Activated B cell treated with CpG ODN at 0.5 μM for 24 hours (primary cell): ENCODE measurements at regions of chr19 and their contacts with region 1.

Region 1: GRCh38 chr19:42132851-42133528 is 744 bp upstream of the POU2F2 start:
- DNase-seq: peak; percentile 97
- ATAC-seq: peak; percentile 27
- H3K4me3 Mint-ChIP-seq: peak overlapping the region; percentile 95
- H3K27ac Mint-ChIP-seq: peak overlapping the region; percentile 90
- H3K4me1 Mint-ChIP-seq: peaks cover 60% of the 10 kb centered on the region
- H3K27me3 Mint-ChIP-seq: no peaks in the 10 kb centered on the region
- CTCF ChIP-seq: no peak

Region 2: GRCh38 chr19:42108527-42109389 is 24.2 kb before region 1 on chr19:
- CTCF ChIA-PET with region 1: interaction called, 426 read pairs
- POLR2A ChIA-PET with region 1: interaction called, 1,230 read pairs
- intact Hi-C with region 1: loop called (anchors 1 kb)
- DNase-seq: peak; percentile 76
- ATAC-seq: peak; percentile 92
- H3K4me3 Mint-ChIP-seq: peak overlapping the region; percentile 47
- H3K27ac Mint-ChIP-seq: peak overlapping the region; percentile 81
- H3K4me1 Mint-ChIP-seq: peaks cover 69% of the 10 kb centered on the region
- H3K27me3 Mint-ChIP-seq: no peaks in the 10 kb centered on the region
- CTCF ChIP-seq: peak; percentile 99

Region 3: GRCh38 chr19:42176990-42177685 is 44.1 kb after region 1 on chr19:
- CTCF ChIA-PET with region 1: interaction called, 28 read pairs
- POLR2A ChIA-PET with region 1: interaction called, 18 read pairs
- intact Hi-C with region 1: loop called (anchors 1 kb)
- DNase-seq: peak; percentile 71
- ATAC-seq: peak; percentile 91
- H3K4me3 Mint-ChIP-seq: no peak overlapping the region
- H3K27ac Mint-ChIP-seq: no peak overlapping the region
- H3K4me1 Mint-ChIP-seq: peaks cover 15% of the 10 kb centered on the region
- H3K27me3 Mint-ChIP-seq: peaks cover 20% of the 10 kb centered on the region
- CTCF ChIP-seq: no peak

Region 4: DNA sequence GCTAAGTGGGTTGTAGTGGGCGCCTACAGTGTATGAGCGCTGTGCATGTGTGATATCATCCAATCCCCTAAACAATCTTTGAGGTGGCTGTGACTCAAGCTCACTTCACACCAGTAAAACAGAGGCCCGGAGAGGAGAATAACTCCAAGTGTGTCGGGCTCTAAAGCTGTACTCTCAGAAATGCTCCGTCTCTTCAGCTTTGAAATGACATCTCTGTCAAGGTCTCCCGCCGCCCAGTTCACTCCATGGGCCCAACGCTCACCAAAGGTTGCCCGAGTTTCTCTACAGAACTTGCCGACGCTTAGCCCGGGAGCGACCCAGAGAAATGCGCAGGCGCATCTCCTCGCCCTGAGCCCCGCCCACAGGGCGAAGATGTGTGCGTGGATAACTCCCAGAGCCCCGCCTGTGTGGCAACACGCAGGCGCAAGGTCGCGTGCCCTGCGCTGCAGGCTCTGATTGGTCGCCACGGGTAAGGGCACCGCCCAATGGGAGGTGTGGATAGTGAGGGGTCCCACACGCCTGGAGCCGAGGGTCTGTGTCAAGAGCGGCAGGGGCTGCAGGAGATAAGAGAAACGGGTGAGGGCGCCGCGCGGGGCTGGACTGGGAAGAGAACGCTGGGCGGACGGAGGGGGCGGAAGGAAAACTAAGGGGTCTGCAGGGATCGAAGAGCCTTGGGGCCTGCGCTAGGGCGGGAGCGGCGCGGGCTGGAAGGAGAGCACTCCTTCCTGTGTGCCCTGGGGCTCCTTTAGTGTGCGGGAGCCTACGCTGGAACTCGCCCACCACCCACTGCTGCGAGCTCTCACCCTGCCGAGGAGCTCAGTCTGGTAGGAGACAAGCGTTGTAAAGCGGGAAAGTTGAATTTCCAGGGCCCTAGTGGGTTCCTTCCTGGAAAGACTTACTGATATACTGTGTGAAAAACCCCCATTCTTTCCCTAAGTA is 87.1 kb after region 1 on chr19 and contains the start of gene ZNF526:
- CTCF ChIA-PET with region 1: interaction called, 3 read pairs
- POLR2A ChIA-PET with region 1: interaction called, 8 read pairs
- intact Hi-C with region 1: loop called (anchors 1 kb)
- DNase-seq: peak; percentile 93
- ATAC-seq: peak; percentile 83
- H3K4me3 Mint-ChIP-seq: peak within 1 kb of the TSS; percentile 99
- H3K27ac Mint-ChIP-seq: peak within 1 kb of the TSS; percentile 93
- H3K4me1 Mint-ChIP-seq: peaks cover 55% of the 10 kb centered on the region
- H3K27me3 Mint-ChIP-seq: no peaks in the 10 kb centered on the region
- CTCF ChIP-seq: no peak
- total RNA-seq, gene ZNF526: 19.6 and 22.7 TPM in 2 replicates

Region 5: GRCh38 chr19:42283143-42284065 is 150.4 kb after region 1 on chr19:
- CTCF ChIA-PET with region 1: interaction called, 26 read pairs
- POLR2A ChIA-PET with region 1: interaction called, 15 read pairs
- intact Hi-C with region 1: loop called (anchors 1 kb)
- DNase-seq: peak; percentile 91
- ATAC-seq: peak; percentile 64
- H3K4me3 Mint-ChIP-seq: no peak overlapping the region
- H3K27ac Mint-ChIP-seq: no peak overlapping the region
- H3K4me1 Mint-ChIP-seq: peaks cover 55% of the 10 kb centered on the region
- H3K27me3 Mint-ChIP-seq: no peaks in the 10 kb centered on the region
- CTCF ChIP-seq: no peak

Region 6: GRCh38 chr19:42325273-42325895 is 192.4 kb after region 1 on chr19 and contains the start of gene MEGF8:
- CTCF ChIA-PET with region 1: interaction called, 3 read pairs
- POLR2A ChIA-PET with region 1: interaction called, 8 read pairs
- intact Hi-C with region 1: loop called (anchors 1 kb)
- DNase-seq: peak; percentile 94
- ATAC-seq: peak; percentile 90
- H3K4me3 Mint-ChIP-seq: peak within 1 kb of the TSS; percentile 87
- H3K27ac Mint-ChIP-seq: peak within 1 kb of the TSS; percentile 75
- H3K4me1 Mint-ChIP-seq: peaks cover 21% of the 10 kb centered on the region
- H3K27me3 Mint-ChIP-seq: peaks cover 7% of the 10 kb centered on the region
- CTCF ChIP-seq: peak; percentile 5
- total RNA-seq, gene MEGF8: 13.0 and 15.1 TPM in 2 replicates

Region 7: DNA sequence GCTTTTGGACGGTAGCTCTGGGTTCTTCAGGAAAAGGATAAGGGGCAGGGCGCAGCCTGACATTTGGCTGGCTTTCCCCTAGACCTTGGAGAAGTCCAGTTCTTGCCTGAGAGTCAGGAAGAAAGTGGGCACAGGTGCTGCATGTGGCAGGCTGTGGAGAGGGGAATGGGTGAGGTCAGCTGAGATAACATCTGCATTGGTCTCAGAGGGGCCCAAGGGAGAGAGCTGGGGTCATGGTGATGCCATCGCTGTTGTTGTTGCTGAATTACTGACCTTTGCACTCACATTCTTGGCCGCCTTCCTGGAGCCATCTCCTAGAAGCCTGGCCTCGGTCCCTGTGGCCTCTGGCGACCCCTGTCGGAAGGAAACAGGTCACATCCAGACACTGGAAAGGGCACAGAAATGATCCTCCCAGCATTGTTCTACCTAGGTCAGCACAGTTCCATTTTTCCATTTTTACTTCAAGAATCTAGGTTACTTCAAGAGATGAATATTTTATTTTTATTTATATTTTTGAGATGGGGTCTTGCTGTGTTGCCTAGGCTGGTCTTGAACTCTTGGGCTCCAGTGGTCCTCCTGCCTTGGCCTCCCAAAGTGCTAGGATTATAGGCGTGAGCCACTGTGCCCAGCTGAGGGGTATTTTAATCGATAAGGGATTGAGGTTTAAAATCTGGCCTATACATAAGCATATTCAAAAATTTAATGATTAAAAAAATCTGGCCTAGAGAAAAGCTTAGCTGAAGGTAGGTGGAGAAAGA is 300.7 kb after region 1 on chr19:
- CTCF ChIA-PET with region 1: interaction called, 3 read pairs
- POLR2A ChIA-PET with region 1: no interaction called
- intact Hi-C with region 1: loop called (anchors 1 kb)
- DNase-seq: no peak
- ATAC-seq: peak; percentile 66
- H3K4me3 Mint-ChIP-seq: no peak overlapping the region
- H3K27ac Mint-ChIP-seq: no peak overlapping the region
- H3K4me1 Mint-ChIP-seq: peaks cover 4% of the 10 kb centered on the region
- H3K27me3 Mint-ChIP-seq: no peaks in the 10 kb centered on the region
- CTCF ChIP-seq: no peak